ENCODE measurements at regions of chr6 and their contacts with region 1.

Region 1: DNA sequence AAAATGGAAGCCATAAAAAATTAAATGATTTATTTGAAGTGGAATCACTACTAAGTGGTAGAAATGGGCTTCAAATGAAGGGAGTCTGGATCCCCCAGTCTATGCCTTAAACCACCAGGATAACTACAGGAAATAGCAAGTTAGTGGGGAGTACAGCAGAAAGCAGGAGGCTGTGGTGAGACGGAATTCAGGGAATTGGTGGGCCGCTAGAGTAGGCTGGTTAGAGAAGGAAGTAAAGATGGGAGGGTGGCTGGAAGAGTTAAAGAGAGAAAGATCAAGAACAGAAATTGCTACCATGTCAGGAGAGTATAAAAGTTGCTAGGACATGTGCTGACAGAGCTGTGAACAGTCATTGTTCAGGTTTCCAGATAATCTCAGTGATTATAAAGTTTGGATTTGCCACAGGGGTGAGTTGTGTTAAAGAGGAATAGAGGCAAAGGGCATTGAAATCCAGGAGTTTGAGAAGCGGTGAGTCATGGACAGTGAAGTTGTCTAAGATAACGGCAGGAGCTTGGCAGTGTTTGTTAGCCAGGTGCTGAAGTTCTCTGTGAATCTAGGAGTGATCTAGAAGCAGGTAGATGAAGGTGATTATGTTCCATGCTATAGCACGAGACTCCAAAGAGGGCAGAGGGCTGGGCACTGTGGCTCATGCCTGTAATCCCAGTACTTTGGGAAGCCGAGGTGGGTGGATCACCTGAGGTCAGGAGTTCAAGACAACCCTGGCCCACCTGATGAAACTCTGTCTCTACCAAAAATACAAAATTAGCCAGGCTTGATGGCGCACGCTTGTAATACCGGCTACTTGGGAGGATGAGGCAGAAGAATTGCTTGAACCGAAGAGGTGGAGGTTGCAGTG is 13.7 kb upstream of the HINT3 start:
- DNase-seq: peak; percentile 75
- ATAC-seq: peak; percentile 61
- H3K4me3 ChIP-seq: no peak overlapping the region
- H3K27ac ChIP-seq: peak overlapping the region; percentile 82
- H3K4me1 ChIP-seq: peaks cover 69% of the 10 kb centered on the region
- H3K27me3 ChIP-seq: no peaks in the 10 kb centered on the region
- CTCF ChIP-seq: no peak

Region 2: GRCh38 chr6:125834348-125834747 is 108.6 kb before region 1 on chr6:
- CTCF ChIA-PET with region 1: no interaction called
- POLR2A ChIA-PET with region 1: no interaction called
- intact Hi-C with region 1: no loop called
- DNase-seq: no peak
- ATAC-seq: no peak
- H3K4me3 ChIP-seq: no peak overlapping the region
- H3K27ac ChIP-seq: no peak overlapping the region
- H3K4me1 ChIP-seq: no peaks in the 10 kb centered on the region
- H3K27me3 ChIP-seq: no peaks in the 10 kb centered on the region
- CTCF ChIP-seq: no peak

Region 3: GRCh38 chr6:125872259-125872921 is 70.5 kb before region 1 on chr6:
- CTCF ChIA-PET with region 1: no interaction called
- POLR2A ChIA-PET with region 1: no interaction called
- intact Hi-C with region 1: no loop called
- DNase-seq: peak; percentile 78
- ATAC-seq: peak; percentile 68
- H3K4me3 ChIP-seq: peak overlapping the region; percentile 23; the same call in 1 of the 2 replicates
- H3K27ac ChIP-seq: peak overlapping the region; percentile 68
- H3K4me1 ChIP-seq: peaks cover 40% of the 10 kb centered on the region
- H3K27me3 ChIP-seq: no peaks in the 10 kb centered on the region
- CTCF ChIP-seq: no peak

Region 4: DNA sequence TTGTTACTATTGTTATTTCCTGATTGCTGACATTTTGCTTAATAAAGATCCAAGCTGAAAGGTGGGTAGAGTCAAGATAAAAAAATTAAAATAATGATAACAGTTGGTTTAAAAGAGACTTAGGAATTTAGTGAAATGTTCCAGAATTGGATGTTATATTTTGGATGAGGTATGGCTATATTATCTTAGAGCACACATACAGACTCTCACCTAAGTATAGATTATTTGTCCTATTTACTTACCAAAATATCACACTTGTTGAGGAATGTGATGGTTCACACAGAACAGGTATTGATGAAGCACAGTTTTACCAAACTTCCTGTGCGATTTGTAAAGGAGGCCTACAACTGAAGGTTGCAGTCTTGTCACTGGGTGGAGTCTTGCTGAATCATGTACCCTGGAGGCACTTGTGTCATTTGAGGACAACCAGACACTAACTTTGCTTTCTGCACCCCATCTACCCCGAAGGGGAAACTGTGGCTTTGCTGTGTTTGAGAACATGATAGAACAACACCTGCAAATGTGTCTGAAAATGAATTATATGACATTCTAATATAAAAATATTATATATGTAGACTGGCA is 18.8 kb before region 1 on chr6:
- CTCF ChIA-PET with region 1: no interaction called
- POLR2A ChIA-PET with region 1: no interaction called
- intact Hi-C with region 1: loop called (anchors 2 kb)
- DNase-seq: peak; percentile 60
- ATAC-seq: peak; percentile 25; the same call in 1 of the 2 replicates
- H3K4me3 ChIP-seq: no peak overlapping the region
- H3K27ac ChIP-seq: peak overlapping the region; percentile 27; the same call in 1 of the 2 replicates
- H3K4me1 ChIP-seq: peaks cover 44% of the 10 kb centered on the region
- H3K27me3 ChIP-seq: no peaks in the 10 kb centered on the region
- CTCF ChIP-seq: no peak

Region 5: DNA sequence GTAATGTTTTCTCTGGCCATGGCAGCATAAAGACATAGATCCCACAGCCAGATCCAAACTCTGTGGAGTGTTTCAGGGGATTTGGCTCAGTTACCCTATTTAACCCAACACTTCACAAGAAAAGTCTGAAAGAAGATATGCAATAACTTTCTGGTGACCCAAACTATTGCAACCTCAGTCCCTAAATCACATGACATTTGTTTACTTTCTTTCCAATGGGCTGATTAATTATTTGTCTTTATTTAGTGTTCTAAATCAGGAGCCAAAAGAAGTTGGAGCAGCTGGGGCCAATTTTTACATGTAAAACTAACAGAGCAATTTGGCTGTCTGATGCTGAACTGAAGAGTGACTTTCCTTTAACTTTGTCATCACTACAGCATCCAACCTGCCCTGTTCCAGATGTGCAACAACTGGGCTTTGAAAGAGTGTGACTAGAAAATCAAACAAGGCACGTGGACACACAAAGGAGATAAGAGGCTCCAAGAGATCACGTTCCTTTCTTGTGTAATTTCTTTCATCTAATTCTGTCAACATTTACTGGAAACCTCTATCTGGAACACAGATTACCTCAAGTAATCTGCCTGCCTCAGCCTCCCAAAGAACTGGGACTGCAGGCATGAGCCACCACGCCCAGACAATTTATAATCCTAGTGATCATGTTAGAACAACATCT is 134.2 kb after region 1 on chr6:
- CTCF ChIA-PET with region 1: no interaction called
- POLR2A ChIA-PET with region 1: no interaction called
- intact Hi-C with region 1: no loop called
- DNase-seq: no peak
- ATAC-seq: no peak
- H3K4me3 ChIP-seq: no peak overlapping the region
- H3K27ac ChIP-seq: no peak overlapping the region
- H3K4me1 ChIP-seq: no peaks in the 10 kb centered on the region
- H3K27me3 ChIP-seq: no peaks in the 10 kb centered on the region
- CTCF ChIP-seq: no peak

Measured in PC-3 (cell line).